PC-3 (cell line): ENCODE measurements at regions of chr1 and their contacts with region 1.

Region 1: DNA sequence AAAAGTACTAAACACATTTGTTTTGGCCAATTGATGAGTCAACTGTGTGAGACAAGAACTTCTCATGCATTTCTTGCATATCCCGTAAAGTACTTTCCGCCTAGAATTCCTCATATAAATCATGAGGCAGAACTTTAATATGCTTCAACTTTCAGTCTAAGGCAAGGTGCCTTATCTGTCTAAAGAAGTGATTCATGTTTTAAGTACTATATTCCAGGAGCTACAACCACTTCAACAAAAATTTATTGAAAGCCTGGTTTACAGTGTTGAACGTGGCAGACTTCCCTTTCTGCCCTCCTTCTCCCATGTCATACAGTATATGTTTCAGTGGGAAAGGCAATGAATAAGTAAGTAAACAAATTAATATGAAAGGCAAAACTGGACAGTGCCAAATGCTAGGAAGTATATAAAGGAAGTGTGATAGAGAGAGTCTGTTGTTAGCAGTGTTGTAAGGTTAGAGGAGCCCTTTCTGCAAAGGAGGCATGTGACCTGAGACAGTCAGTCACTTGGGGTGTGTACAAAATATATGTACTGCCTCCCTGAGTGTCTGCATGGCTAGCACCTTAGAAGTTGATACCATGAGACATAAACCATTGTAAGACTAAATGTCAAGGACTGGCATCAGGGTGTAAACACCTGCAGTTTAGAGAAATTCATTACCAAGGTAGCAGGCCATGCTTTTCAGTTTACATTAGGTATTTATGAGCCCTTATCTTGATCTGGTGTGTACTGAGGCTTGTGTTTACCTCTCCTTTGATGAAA is 362.2 kb downstream of the SRGAP2C start:
- DNase-seq: peak; percentile 93
- ATAC-seq: peak; percentile 93
- H3K4me3 ChIP-seq: no peak overlapping the region
- H3K27ac ChIP-seq: peak overlapping the region; percentile 55
- H3K4me1 ChIP-seq: peaks cover 11% of the 10 kb centered on the region
- H3K27me3 ChIP-seq: no peaks in the 10 kb centered on the region
- CTCF ChIP-seq: no peak

Region 2: GRCh38 chr1:121458291-121459048 is 88.5 kb before region 1 on chr1:
- CTCF ChIA-PET with region 1: no interaction called
- POLR2A ChIA-PET with region 1: no interaction called
- intact Hi-C with region 1: loop called (anchors 5 kb)
- DNase-seq: no peak
- ATAC-seq: no peak
- H3K4me3 ChIP-seq: no peak overlapping the region
- H3K27ac ChIP-seq: no peak overlapping the region
- H3K4me1 ChIP-seq: no peaks in the 10 kb centered on the region
- H3K27me3 ChIP-seq: no peaks in the 10 kb centered on the region
- CTCF ChIP-seq: no peak

Region 3: DNA sequence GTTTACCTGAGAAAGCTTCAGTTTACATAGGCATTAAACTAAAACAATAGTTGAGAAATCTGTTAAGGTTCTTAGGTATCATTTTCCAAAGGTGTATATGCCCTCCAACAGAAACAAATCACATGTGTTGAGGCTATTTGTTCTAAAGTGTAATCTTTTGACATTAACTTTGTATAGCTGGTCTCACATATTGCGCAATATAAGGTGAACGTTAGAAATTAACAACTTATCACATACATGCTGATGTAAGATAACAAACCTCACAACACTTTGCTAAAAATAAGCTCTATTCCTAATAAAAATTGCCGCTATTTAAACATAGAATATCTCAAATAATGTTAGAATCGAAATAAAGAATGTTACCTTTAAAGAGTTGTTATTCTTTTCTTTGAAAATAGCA is 21.7 kb before region 1 on chr1:
- CTCF ChIA-PET with region 1: no interaction called
- POLR2A ChIA-PET with region 1: no interaction called
- intact Hi-C with region 1: no loop called
- DNase-seq: no peak
- ATAC-seq: no peak
- H3K4me3 ChIP-seq: no peak overlapping the region
- H3K27ac ChIP-seq: no peak overlapping the region
- H3K4me1 ChIP-seq: no peaks in the 10 kb centered on the region
- H3K27me3 ChIP-seq: no peaks in the 10 kb centered on the region
- CTCF ChIP-seq: no peak

Region 4: DNA sequence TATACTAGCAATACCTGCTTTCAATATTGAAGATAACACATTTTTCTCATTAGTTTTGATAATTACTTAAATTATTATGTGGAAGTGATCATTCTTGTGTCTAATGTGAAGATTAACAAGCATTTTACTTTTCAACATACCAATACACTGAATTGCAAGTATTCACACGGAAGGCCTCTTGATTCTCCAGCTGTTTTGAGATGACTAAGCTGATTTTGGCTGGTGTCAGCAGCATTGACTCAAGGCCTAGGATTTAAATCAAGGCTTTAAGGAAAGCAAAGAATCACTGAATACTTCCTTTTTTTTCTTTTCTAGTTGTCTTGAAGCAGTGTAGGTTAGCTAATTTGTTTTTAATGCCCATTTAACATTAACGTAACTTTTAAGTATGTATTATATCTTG is 11.5 kb after region 1 on chr1:
- CTCF ChIA-PET with region 1: no interaction called
- POLR2A ChIA-PET with region 1: no interaction called
- intact Hi-C with region 1: no loop called
- DNase-seq: peak; percentile 73
- ATAC-seq: peak; percentile 81
- H3K4me3 ChIP-seq: no peak overlapping the region
- H3K27ac ChIP-seq: no peak overlapping the region
- H3K4me1 ChIP-seq: peaks cover 7% of the 10 kb centered on the region
- H3K27me3 ChIP-seq: no peaks in the 10 kb centered on the region
- CTCF ChIP-seq: no peak

Region 5: GRCh38 chr1:121586369-121587229 is 39.6 kb after region 1 on chr1:
- CTCF ChIA-PET with region 1: no interaction called
- POLR2A ChIA-PET with region 1: no interaction called
- intact Hi-C with region 1: loop called (anchors 1 kb)
- DNase-seq: peak; percentile 65
- ATAC-seq: peak; percentile 67
- H3K4me3 ChIP-seq: no peak overlapping the region
- H3K27ac ChIP-seq: peak overlapping the region; percentile 88
- H3K4me1 ChIP-seq: peaks cover 27% of the 10 kb centered on the region
- H3K27me3 ChIP-seq: no peaks in the 10 kb centered on the region
- CTCF ChIP-seq: no peak